ENCODE measurements at regions of chr5 and their contacts with region 1.

Region 1: GRCh38 chr5:178695556-178695955 is 34.9 kb downstream of the ZNF354A start:
- DNase-seq: no peak
- H3K4me3 ChIP-seq: no peak overlapping the region
- H3K4me3 Mint-ChIP-seq: no peak overlapping the region
- H3K27ac Mint-ChIP-seq: no peak overlapping the region
- H3K4me1 ChIP-seq: no peaks in the 10 kb centered on the region
- H3K4me1 Mint-ChIP-seq: no peaks in the 10 kb centered on the region
- H3K27me3 ChIP-seq: no peaks in the 10 kb centered on the region
- H3K27me3 Mint-ChIP-seq: no peaks in the 10 kb centered on the region
- CTCF ChIP-seq: no peak

Region 2: GRCh38 chr5:178527458-178528307 is 167.9 kb before region 1 on chr5:
- CTCF ChIA-PET with region 1: no interaction called
- POLR2A ChIA-PET with region 1: interaction called, 12 read pairs
- intact Hi-C with region 1: no loop called
- DNase-seq: no peak
- H3K4me3 ChIP-seq: no peak overlapping the region
- H3K4me3 Mint-ChIP-seq: no peak overlapping the region
- H3K27ac Mint-ChIP-seq: no peak overlapping the region
- H3K4me1 ChIP-seq: no peaks in the 10 kb centered on the region
- H3K4me1 Mint-ChIP-seq: no peaks in the 10 kb centered on the region
- H3K27me3 ChIP-seq: no peaks in the 10 kb centered on the region
- H3K27me3 Mint-ChIP-seq: no peaks in the 10 kb centered on the region
- CTCF ChIP-seq: no peak

Measured in Caco-2 (cell line).